Activated CD4-positive, alpha-beta memory T cell treated with anti-CD3 and anti-CD28 coated beads for 36 hours (primary cell): ENCODE measurements at regions of chr1 and their contacts with region 1.

Region 1: DNA sequence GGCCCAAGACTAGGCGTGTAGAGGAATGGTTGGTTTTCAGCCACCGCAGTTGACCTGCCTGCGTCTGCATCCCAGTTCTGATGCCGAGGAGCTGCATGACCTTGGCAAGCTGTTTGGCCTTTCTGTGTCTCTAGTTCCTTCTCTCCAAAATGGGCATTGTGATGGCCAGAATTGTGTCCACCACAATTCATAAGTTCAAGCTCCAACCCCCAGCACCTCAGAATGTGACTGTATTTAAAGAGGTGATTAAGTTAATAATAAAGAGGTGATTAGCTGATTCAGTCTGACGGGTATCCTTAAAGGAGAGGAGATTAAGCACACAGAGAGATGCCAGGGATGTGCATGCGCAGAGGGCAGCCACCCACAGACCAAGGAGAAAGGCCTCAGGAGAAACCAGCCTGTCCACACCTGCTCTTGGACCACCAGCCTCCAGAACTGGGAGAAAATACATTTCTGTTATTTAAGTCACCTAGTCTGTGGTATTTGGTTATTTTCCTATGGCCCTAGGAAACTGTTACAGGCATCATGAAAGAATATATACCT is 28.5 kb downstream of the MAB21L3 start:
- DNase-seq: no peak
- H3K4me3 Mint-ChIP-seq: no peak overlapping the region
- H3K27ac Mint-ChIP-seq: no peak overlapping the region
- H3K4me1 Mint-ChIP-seq: peaks cover 8% of the 10 kb centered on the region
- H3K27me3 Mint-ChIP-seq: peaks cover 6% of the 10 kb centered on the region

Region 2: GRCh38 chr1:115456441-115456961 is 683.2 kb before region 1 on chr1:
- CTCF ChIA-PET with region 1: no interaction called
- POLR2A ChIA-PET with region 1: no interaction called
- intact Hi-C with region 1: no loop called
- DNase-seq: no peak
- H3K4me3 Mint-ChIP-seq: no peak overlapping the region
- H3K27ac Mint-ChIP-seq: no peak overlapping the region
- H3K4me1 Mint-ChIP-seq: no peaks in the 10 kb centered on the region
- H3K27me3 Mint-ChIP-seq: peaks cover 7% of the 10 kb centered on the region

Region 3: DNA sequence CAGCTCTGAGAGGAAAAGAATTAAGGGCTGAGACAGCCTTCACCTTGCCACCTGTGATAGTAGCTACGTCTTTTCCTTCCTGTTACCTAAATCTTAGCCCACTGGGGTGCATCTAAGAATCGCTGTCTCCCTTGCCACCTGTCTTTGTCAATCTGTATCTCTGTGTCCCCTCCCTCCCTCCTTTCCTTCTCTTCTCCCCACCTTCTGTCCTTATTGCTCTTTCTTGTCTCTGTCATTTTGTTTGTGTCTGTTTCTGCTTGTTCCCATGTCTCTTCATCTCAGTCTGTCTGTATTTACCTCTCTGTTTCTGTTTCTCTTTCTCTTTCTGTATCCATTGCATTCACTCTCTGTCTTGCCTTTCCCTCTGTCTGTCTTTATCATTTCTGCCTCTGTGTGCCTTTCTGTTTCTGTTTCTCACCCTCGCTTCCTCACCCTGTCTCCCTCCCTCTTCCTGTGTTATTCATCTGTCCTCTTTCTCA is 133.1 kb before region 1 on chr1:
- CTCF ChIA-PET with region 1: no interaction called
- POLR2A ChIA-PET with region 1: no interaction called
- intact Hi-C with region 1: no loop called
- DNase-seq: no peak
- H3K4me3 Mint-ChIP-seq: peak overlapping the region; percentile 60
- H3K27ac Mint-ChIP-seq: peak overlapping the region; percentile 57
- H3K4me1 Mint-ChIP-seq: peaks cover 11% of the 10 kb centered on the region
- H3K27me3 Mint-ChIP-seq: no peaks in the 10 kb centered on the region

Region 4: DNA sequence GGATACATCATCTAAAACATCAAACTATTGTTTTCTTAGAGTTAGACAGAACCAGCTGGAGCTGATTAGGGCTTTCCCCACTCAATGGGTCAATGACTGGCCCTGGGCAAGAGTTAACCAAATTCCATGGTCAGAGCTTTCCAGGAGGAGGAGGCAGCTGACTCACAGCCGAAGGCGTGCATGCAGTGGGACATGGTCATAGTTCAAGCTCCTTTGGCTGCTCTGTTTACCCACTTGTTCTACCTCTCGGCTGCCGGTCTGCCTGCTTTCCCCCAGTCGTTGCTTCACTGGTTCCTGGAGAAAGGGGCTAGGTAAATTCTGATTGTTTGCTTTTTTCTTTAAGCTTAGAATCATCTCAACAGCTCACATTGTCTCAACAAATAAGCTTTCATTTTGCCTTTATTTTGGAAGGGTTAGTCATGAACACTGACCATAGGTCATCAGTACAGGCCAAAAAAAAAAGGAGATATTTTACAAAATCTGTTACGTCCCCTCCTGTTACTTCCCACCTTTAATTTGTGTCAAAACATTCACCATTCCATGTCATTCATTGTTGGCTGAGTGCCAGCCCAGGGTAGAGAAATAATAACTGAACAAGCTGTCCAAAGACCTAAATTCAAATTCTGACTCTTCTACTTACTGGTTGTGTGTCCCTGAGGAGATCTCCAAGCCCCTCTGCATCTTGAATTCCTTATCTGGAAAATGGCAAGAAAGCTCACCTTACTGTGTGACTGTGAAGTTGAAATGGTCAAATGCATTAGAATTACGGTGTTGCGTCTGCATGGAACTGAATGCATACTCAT is 16.5 kb before region 1 on chr1:
- CTCF ChIA-PET with region 1: interaction called, 14 read pairs
- POLR2A ChIA-PET with region 1: no interaction called
- intact Hi-C with region 1: no loop called
- DNase-seq: no peak
- H3K4me3 Mint-ChIP-seq: no peak overlapping the region
- H3K27ac Mint-ChIP-seq: no peak overlapping the region
- H3K4me1 Mint-ChIP-seq: peaks cover 22% of the 10 kb centered on the region
- H3K27me3 Mint-ChIP-seq: peaks cover 26% of the 10 kb centered on the region

Region 5: GRCh38 chr1:116151739-116152576 is 12.3 kb after region 1 on chr1:
- CTCF ChIA-PET with region 1: interaction called, 72 read pairs
- POLR2A ChIA-PET with region 1: no interaction called
- intact Hi-C with region 1: no loop called
- DNase-seq: peak; percentile 85
- H3K4me3 Mint-ChIP-seq: peak overlapping the region; percentile 40
- H3K27ac Mint-ChIP-seq: no peak overlapping the region
- H3K4me1 Mint-ChIP-seq: peaks cover 11% of the 10 kb centered on the region
- H3K27me3 Mint-ChIP-seq: peaks cover 1% of the 10 kb centered on the region

Region 6: DNA sequence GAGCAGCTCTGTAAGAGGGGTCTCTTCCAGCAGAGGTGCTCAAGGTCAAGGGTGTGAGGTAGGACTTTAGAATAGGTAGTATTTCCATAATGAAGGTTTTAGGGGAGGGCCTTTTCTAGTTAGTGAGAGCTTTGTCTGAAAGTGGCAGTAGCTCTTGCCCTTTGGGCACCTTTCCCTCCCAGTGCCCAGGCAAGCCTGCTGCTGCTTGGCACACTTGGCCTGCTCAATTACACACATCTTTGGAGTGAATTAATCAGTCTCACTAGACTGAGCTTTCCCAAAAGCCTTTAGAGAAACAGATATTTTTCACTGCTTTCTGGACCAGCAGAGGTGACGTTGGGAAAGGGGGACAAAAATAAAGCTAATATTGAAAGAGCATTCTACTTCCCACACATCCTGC is 19.5 kb after region 1 on chr1:
- CTCF ChIA-PET with region 1: interaction called, 23 read pairs
- POLR2A ChIA-PET with region 1: no interaction called
- intact Hi-C with region 1: no loop called
- DNase-seq: no peak
- H3K4me3 Mint-ChIP-seq: no peak overlapping the region
- H3K27ac Mint-ChIP-seq: no peak overlapping the region
- H3K4me1 Mint-ChIP-seq: no peaks in the 10 kb centered on the region
- H3K27me3 Mint-ChIP-seq: no peaks in the 10 kb centered on the region

Region 7: GRCh38 chr1:116168277-116169097 is 28.8 kb after region 1 on chr1:
- CTCF ChIA-PET with region 1: interaction called, 23 read pairs
- POLR2A ChIA-PET with region 1: no interaction called
- intact Hi-C with region 1: loop called (anchors 1 kb)
- DNase-seq: peak; percentile 88
- H3K4me3 Mint-ChIP-seq: peak overlapping the region; percentile 72
- H3K27ac Mint-ChIP-seq: no peak overlapping the region
- H3K4me1 Mint-ChIP-seq: peaks cover 12% of the 10 kb centered on the region
- H3K27me3 Mint-ChIP-seq: no peaks in the 10 kb centered on the region

Region 8: DNA sequence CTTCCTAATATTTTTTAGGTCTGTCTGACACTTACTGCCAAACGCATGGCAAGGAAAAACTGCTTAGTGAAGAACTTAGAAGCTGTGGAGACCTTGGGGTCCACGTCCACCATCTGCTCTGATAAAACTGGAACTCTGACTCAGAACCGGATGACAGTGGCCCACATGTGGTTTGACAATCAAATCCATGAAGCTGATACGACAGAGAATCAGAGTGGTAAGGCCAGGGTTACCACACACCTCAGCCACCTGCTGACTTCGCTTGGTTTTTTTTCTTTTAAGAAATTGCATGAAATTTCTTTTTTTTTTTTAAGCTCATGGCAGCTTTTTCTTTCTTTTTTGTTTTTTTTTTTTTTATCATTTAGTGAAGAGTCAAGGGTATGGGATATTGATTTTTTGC is 250.5 kb after region 1 on chr1:
- CTCF ChIA-PET with region 1: interaction called, 10 read pairs
- POLR2A ChIA-PET with region 1: no interaction called
- intact Hi-C with region 1: no loop called
- DNase-seq: peak; percentile 80
- H3K4me3 Mint-ChIP-seq: no peak overlapping the region
- H3K27ac Mint-ChIP-seq: no peak overlapping the region
- H3K4me1 Mint-ChIP-seq: peaks cover 55% of the 10 kb centered on the region
- H3K27me3 Mint-ChIP-seq: no peaks in the 10 kb centered on the region

Region 9: DNA sequence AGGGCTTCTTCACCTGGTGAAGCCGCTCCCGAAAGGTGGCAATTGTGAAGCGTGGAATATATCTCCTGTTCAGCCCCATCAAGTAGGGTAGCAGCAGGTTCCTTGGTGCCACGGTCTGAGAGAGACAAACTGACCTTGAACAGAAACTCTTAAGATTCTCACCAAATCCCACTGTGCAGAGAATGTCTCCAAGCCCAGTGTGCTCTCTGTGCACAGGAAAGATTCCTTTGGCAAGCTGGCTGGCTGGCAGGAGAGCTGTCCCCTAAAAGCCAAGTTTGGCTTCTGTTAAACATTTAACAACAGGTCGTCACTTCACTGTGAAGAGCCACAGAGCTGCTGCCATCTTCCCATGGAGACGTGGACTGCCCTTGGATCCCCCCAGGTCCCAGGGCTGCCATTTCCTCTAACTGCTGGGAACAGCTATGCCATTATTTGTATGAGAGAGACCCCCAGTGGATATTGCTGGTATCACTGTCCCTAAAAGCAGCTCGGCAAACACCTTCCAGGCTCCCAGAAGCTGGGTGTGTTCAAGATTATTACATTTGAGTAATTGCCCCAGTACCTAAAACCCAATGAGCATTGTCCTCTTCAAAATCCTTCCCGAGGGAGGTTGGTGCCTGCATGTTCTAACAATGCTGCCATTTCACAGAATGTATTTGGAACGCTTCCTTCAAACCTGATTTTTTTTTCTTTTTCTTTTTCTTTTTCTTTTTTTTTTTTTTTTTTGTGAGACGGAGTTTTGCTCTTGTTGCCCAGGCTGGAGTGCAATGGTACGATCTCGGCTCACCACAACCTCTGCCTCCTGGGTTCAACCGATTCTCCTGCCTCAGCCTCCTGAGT is 359.3 kb after region 1 on chr1:
- CTCF ChIA-PET with region 1: interaction called, 130 read pairs
- POLR2A ChIA-PET with region 1: no interaction called
- intact Hi-C with region 1: loop called (anchors 1 kb)
- DNase-seq: peak; percentile 53
- H3K4me3 Mint-ChIP-seq: no peak overlapping the region
- H3K27ac Mint-ChIP-seq: no peak overlapping the region
- H3K4me1 Mint-ChIP-seq: peaks cover 27% of the 10 kb centered on the region
- H3K27me3 Mint-ChIP-seq: no peaks in the 10 kb centered on the region